Psoas muscle (tissue), 8 donors: ENCODE measurements at regions of chr13 and their contacts with region 1.

Region 1: DNA sequence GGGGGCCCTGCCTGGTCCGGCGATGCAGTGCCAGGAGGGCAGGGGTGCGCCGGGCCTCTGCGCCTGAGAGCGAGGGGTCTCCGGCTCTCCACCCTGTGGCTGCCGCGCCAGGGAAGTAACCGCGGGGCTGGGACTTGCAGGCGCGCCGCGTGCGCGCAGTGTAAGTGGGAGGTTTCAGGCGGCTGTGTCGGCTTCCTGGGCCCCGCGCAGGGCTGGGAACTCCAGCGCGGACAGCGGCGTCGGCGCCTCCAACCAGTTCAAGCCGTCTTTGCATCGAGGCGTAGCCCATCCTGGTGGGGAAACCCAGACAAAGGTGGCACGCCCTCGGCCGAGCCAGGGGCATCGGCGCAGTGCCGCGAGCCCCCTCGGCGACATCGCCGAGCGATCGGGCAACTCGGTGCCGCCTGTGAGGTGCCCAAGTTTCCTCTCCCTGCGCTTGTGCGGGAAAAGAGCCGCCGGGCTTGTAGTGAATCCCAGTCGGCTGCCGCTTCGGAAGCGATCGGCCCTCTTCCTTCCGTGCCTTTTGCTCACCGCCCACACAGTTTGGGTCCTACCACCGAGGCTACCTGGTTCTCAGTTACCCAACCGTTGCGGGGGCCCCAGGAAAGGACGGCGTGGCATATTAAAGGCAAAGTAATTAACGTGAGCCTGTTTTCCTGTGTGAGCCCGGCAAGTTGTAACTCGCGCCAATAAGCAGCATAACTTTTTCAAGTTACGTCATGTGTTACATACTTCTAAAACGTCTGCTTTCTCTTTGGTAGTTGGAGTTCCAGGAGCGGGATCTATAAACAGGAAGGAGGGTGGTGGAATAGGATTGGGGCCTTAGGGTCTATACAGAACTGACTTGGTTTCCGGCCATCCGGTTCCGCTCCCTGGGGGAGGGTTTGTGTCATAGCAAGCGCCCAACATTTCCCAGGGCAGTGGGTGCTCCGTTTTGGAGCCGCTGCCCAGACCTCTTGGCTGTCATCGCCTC is 1.2 kb downstream of the LRCH1 start:
- DNase-seq: peak; percentile 63 to 76
- ATAC-seq: peak; percentile 53 to 74 (median 62)
- H3K4me3 ChIP-seq: peak overlapping the region; percentile 92
- H3K27ac ChIP-seq: peak overlapping the region; percentile 84
- H3K4me1 ChIP-seq: no peaks in the 10 kb centered on the region
- H3K27me3 ChIP-seq: no peaks in the 10 kb centered on the region
- CTCF ChIP-seq: peak; percentile 14

Region 2: DNA sequence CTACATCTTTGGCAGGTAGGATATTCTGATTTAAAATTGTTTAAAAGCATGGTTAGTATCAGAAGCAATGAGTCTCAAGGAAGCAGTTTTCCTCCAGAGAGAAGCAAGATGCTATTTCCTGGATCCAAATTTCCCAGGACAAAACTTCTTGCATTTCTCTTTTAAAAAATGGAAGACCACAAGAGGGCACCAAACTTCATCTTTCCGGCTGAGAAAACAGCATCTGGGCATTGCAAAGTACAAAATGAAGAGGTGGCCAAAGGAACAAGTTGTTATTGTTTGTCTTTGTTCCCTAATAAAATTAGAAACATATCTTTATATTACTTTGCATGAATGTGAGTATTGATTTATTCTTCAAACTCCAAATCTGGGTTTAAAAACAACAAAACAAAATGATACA is 61.2 kb before region 1 on chr13:
- intact Hi-C with region 1: loop called in 1 of 2 experiments (anchors 2 kb)
- DNase-seq: no peak
- ATAC-seq: peak in 1 of 4 donors; percentile 44
- H3K4me3 ChIP-seq: no peak overlapping the region
- H3K27ac ChIP-seq: no peak overlapping the region
- H3K4me1 ChIP-seq: no peaks in the 10 kb centered on the region
- H3K27me3 ChIP-seq: no peaks in the 10 kb centered on the region
- CTCF ChIP-seq: peak; percentile 67

Region 3: GRCh38 chr13:46721054-46721453 is 166.9 kb after region 1 on chr13:
- intact Hi-C with region 1: loop called (anchors 2 to 5 kb)
- DNase-seq: peak in 1 of 2 donors; percentile 39
- ATAC-seq: peak in 2 of 4 donors; percentile 56 to 74
- H3K4me3 ChIP-seq: no peak overlapping the region
- H3K27ac ChIP-seq: no peak overlapping the region
- H3K4me1 ChIP-seq: no peaks in the 10 kb centered on the region
- H3K27me3 ChIP-seq: no peaks in the 10 kb centered on the region
- CTCF ChIP-seq: peak; percentile 70

Region 4: GRCh38 chr13:46810440-46810839 is 256.3 kb after region 1 on chr13:
- intact Hi-C with region 1: no loop called
- DNase-seq: no peak
- ATAC-seq: no peak
- H3K4me3 ChIP-seq: no peak overlapping the region
- H3K27ac ChIP-seq: no peak overlapping the region
- H3K4me1 ChIP-seq: no peaks in the 10 kb centered on the region
- H3K27me3 ChIP-seq: no peaks in the 10 kb centered on the region
- CTCF ChIP-seq: no peak